Vagina (tissue), 2 donors: ENCODE measurements at regions of chr19 and their contacts with region 1.

Region 1: GRCh38 chr19:10388957-10389356 is 8.6 kb upstream of the TYK2 start:
- DNase-seq: no peak
- H3K4me3 ChIP-seq: no peak overlapping the region
- H3K27ac ChIP-seq: no peak overlapping the region
- H3K4me1 ChIP-seq: no peaks in the 10 kb centered on the region
- H3K27me3 ChIP-seq: no peaks in the 10 kb centered on the region
- CTCF ChIP-seq: peak; percentile 76 to 94 (median 89)
- POLR2A ChIP-seq: no peak

Region 2: GRCh38 chr19:10251792-10252694 is 136.9 kb before region 1 on chr19 and contains the start of gene MRPL4:
- intact Hi-C with region 1: no loop called
- DNase-seq: peak in 1 of 2 donors; percentile 98
- H3K4me3 ChIP-seq: peak within 1 kb of the TSS; percentile 72 to 77
- H3K27ac ChIP-seq: peak within 1 kb of the TSS; percentile 71
- H3K4me1 ChIP-seq: peaks cover 23% of the 10 kb centered on the region
- H3K27me3 ChIP-seq: no peaks in the 10 kb centered on the region
- CTCF ChIP-seq: peak in 1 of 3 experiments; percentile 18
- POLR2A ChIP-seq: peak in 1 of 2 donors; percentile 20
- total RNA-seq, gene MRPL4: 55.0 TPM

Region 3: DNA sequence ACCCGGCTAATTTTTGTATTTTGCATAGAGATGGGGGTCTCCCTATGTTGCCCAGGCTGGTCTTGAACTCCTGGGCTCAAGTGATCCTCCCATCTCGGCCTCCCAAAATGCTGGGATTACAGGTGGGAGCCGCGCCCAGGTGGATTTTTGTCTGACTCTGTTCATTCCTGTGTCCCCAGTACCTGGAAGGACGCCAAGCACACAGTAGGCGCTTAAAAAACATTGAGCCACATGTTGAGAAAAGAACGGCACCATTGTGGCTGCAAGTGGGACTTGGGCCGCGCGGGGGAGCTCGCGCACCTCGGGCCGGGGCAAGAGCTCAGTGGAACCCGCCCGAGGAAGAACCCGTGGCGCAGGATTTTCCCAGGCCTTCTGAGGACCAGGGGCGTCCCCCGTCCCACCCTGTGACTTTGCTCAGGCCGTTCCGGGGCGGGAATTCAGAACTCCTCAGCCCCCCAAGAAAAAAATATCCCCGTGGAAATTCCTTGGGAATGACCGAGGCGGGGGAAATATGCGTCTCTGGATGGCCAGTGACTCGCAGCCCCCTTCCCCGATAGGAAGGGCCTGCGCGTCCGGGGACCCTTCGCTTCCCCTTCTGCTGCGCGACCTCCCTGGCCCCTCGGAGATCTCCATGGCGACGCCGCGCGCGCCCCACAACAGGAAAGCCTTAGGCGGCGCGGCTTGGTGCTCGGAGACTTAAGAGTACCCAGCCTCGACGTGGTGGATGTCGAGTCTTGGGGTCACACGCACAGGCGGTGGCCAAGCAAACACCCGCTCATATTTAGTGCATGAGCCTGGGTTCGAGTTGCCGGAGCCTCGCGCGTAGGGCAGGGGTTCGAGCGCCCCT is 119.4 kb before region 1 on chr19:
- intact Hi-C with region 1: loop called (anchors 2 kb)
- DNase-seq: no peak
- H3K4me3 ChIP-seq: peak overlapping the region; percentile 44 to 48
- H3K27ac ChIP-seq: peak overlapping the region; percentile 68
- H3K4me1 ChIP-seq: peaks cover 17% of the 10 kb centered on the region
- H3K27me3 ChIP-seq: no peaks in the 10 kb centered on the region
- CTCF ChIP-seq: peak; percentile 91 to 98 (median 93)
- POLR2A ChIP-seq: no peak

Region 4: DNA sequence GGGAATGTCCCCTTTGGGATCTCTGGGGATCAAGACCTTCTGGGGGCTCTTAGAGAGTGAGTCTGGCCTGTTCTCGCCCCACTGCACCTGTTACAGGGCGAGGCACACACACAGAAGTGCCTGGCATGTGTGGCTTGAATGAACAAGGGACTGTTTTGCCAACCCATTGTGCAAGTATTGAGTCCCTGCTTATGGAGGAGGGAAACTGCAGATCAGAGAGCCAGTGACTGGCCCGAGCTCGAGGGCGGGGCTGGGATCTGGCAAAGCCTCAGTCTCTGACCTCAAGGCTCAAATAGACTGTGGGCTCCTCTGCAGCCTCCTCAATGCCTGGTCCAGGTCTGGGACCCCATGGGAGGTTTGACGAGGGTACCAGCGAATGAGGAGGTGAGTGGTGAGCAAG is 61.2 kb before region 1 on chr19:
- intact Hi-C with region 1: loop called (anchors 5 kb)
- DNase-seq: no peak
- H3K4me3 ChIP-seq: no peak overlapping the region
- H3K27ac ChIP-seq: no peak overlapping the region
- H3K4me1 ChIP-seq: peaks cover 13% of the 10 kb centered on the region
- H3K27me3 ChIP-seq: no peaks in the 10 kb centered on the region
- CTCF ChIP-seq: no peak
- POLR2A ChIP-seq: no peak